ENCODE measurements at regions of chr7 and their contacts with region 1.

Region 1: GRCh38 chr7:47291461-47292081 is 290.3 kb downstream of the TNS3 start:
- DNase-seq: no peak
- H3K4me3 ChIP-seq: no peak overlapping the region
- H3K27ac ChIP-seq: no peak overlapping the region
- H3K4me1 ChIP-seq: no peaks in the 10 kb centered on the region
- H3K27me3 ChIP-seq: no peaks in the 10 kb centered on the region
- CTCF ChIP-seq: no peak
- POLR2A ChIP-seq: no peak

Region 2: DNA sequence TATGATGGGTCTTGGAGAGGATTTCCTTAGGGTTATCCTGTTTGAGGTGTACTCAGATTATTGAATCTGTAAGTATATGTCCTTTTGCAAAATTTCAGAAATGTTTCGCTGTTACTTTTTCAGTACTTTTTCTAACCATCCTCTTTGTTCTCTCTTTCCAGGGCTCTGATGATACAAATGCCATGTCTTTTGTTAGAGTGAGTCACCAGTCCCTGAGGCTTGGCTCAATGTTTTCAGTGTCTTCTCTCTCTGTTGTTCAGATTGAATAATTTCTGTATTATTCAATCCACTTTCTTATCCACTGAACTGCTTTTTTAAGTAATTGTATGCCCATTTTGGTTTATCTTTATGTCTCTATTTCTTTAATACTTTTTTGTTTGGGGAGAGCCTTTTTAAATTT is 159.1 kb before region 1 on chr7:
- intact Hi-C with region 1: loop called (anchors 10 kb)
- DNase-seq: no peak
- H3K4me3 ChIP-seq: no peak overlapping the region
- H3K27ac ChIP-seq: no peak overlapping the region
- H3K4me1 ChIP-seq: no peaks in the 10 kb centered on the region
- H3K27me3 ChIP-seq: no peaks in the 10 kb centered on the region
- CTCF ChIP-seq: no peak
- POLR2A ChIP-seq: no peak

Region 3: GRCh38 chr7:47239931-47240421 is 51.6 kb before region 1 on chr7:
- intact Hi-C with region 1: no loop called
- DNase-seq: no peak
- H3K4me3 ChIP-seq: no peak overlapping the region
- H3K27ac ChIP-seq: peak overlapping the region in 1 of 2 donors; percentile 52
- H3K4me1 ChIP-seq: no peaks in the 10 kb centered on the region
- H3K27me3 ChIP-seq: no peaks in the 10 kb centered on the region
- CTCF ChIP-seq: no peak
- POLR2A ChIP-seq: no peak

Region 4: GRCh38 chr7:47256016-47256415 is 35.6 kb before region 1 on chr7:
- intact Hi-C with region 1: loop called (anchors 1 kb)
- DNase-seq: no peak
- H3K4me3 ChIP-seq: no peak overlapping the region
- H3K27ac ChIP-seq: no peak overlapping the region
- H3K4me1 ChIP-seq: peaks cover 0 to 5% of the 10 kb centered on the region in 2 donors
- H3K27me3 ChIP-seq: no peaks in the 10 kb centered on the region
- CTCF ChIP-seq: no peak
- POLR2A ChIP-seq: no peak

Region 5: GRCh38 chr7:47873762-47874161 is 582.2 kb after region 1 on chr7:
- intact Hi-C with region 1: no loop called
- DNase-seq: no peak
- H3K4me3 ChIP-seq: no peak overlapping the region
- H3K27ac ChIP-seq: no peak overlapping the region
- H3K4me1 ChIP-seq: no peaks in the 10 kb centered on the region
- H3K27me3 ChIP-seq: no peaks in the 10 kb centered on the region
- CTCF ChIP-seq: no peak
- POLR2A ChIP-seq: no peak

Measured in breast epithelium (tissue), 4 donors.